ENCODE measurements at regions of chr3 and their contacts with region 1.

Region 1: DNA sequence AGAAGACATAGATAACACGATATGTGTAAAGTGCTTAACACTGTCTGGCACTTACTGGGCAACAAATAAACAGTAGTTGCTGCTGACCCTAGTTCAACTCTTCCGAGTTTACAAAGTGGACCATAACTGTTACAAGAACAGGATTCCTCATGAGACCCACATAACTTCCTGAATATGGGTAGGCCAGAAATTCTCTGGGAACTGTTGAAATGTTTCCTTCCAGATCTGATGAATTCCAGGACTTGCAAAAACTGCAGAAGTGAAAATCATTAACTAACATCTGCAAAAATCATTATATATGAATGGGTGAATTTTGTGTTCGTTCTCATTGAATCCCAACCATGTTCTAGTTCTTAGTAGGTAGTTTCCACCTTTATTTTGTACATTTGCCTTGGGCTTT is 181.7 kb upstream of the MME start:
- DNase-seq: no peak
- H3K4me3 ChIP-seq: no peak overlapping the region
- H3K27ac ChIP-seq: no peak overlapping the region
- H3K4me1 ChIP-seq: peaks cover 0 to 6% (median 0%) of the 10 kb centered on the region in 4 donors
- H3K27me3 ChIP-seq: no peaks in the 10 kb centered on the region
- CTCF ChIP-seq: no peak
- EP300 ChIP-seq: no peak
- POLR2A ChIP-seq: no peak

Region 2: GRCh38 chr3:153848702-153849101 is 1049.7 kb before region 1 on chr3:
- in situ Hi-C with region 1: no loop called
- intact Hi-C with region 1: loop called (anchors 5 kb)
- DNase-seq: no peak
- H3K4me3 ChIP-seq: no peak overlapping the region
- H3K27ac ChIP-seq: no peak overlapping the region
- H3K4me1 ChIP-seq: no peaks in the 10 kb centered on the region
- H3K27me3 ChIP-seq: no peaks in the 10 kb centered on the region
- CTCF ChIP-seq: no peak
- EP300 ChIP-seq: no peak
- POLR2A ChIP-seq: no peak

Region 3: GRCh38 chr3:154730186-154730585 is 168.3 kb before region 1 on chr3:
- in situ Hi-C with region 1: no loop called
- intact Hi-C with region 1: no loop called
- DNase-seq: no peak
- H3K4me3 ChIP-seq: no peak overlapping the region
- H3K27ac ChIP-seq: no peak overlapping the region
- H3K4me1 ChIP-seq: no peaks in the 10 kb centered on the region
- H3K27me3 ChIP-seq: no peaks in the 10 kb centered on the region
- CTCF ChIP-seq: no peak
- EP300 ChIP-seq: no peak
- POLR2A ChIP-seq: no peak